ENCODE measurements at regions of chrX and their contacts with region 1.

Region 1: DNA sequence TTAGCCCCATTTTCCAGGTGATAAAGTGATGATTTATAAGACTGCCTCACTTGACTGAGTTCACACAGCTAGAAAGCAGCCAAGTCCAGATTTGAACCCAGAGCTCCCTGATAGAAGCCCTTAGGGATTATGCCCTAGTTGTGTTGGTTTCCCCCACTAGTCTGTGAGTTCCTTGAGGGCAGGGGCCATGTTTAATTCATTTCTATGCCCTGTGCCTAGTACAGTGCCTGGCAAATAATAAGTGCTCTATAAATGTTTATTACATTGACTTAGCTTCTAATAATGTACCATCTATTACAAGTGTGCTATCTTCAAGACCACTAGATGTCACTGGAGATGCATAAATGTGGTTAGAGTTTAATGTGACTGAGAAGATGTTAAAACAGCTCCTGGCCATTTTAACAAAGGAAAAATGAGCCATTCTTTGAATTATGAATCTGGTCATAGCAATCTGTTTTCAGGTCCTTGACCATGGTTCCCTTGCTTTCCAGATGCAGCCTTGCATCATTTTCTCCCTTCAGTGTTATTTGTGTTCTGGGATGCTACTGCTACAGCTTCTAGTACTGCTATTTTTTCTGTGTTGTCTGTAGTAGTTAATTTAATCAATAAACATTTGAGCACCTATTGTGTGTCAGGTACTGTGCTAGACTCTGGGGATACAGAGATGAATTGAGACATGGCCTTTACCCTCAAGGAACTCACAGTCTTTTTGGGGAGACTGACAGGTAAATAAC is 43.2 kb downstream of the SLC9A6 start:
- DNase-seq: no peak
- H3K4me3 ChIP-seq: no peak overlapping the region
- H3K27ac ChIP-seq: peak overlapping the region in 1 of 2 donors; percentile 86
- H3K4me1 ChIP-seq: peaks cover 2 to 34% of the 10 kb centered on the region in 2 donors
- H3K27me3 ChIP-seq: no peaks in the 10 kb centered on the region
- CTCF ChIP-seq: peak; percentile 58 to 77 (median 63)

Region 2: GRCh38 chrX:135081693-135082404 is 946.6 kb before region 1 on chrX:
- intact Hi-C with region 1: no loop called
- DNase-seq: no peak
- H3K4me3 ChIP-seq: no peak overlapping the region
- H3K27ac ChIP-seq: no peak overlapping the region
- H3K4me1 ChIP-seq: no peaks in the 10 kb centered on the region
- H3K27me3 ChIP-seq: no peaks in the 10 kb centered on the region
- CTCF ChIP-seq: no peak

Region 3: GRCh38 chrX:136065044-136065671 is 36.7 kb after region 1 on chrX:
- intact Hi-C with region 1: no loop called
- DNase-seq: no peak
- H3K4me3 ChIP-seq: no peak overlapping the region
- H3K27ac ChIP-seq: peak overlapping the region; percentile 82 to 88
- H3K4me1 ChIP-seq: peaks cover 2 to 16% of the 10 kb centered on the region in 2 donors
- H3K27me3 ChIP-seq: no peaks in the 10 kb centered on the region
- CTCF ChIP-seq: no peak

Region 4: GRCh38 chrX:136121788-136122187 is 93.4 kb after region 1 on chrX:
- intact Hi-C with region 1: loop called (anchors 5 kb)
- DNase-seq: peak in 1 of 2 donors; percentile 68
- H3K4me3 ChIP-seq: no peak overlapping the region
- H3K27ac ChIP-seq: peak overlapping the region in 1 of 2 donors; percentile 45
- H3K4me1 ChIP-seq: peaks cover 0 to 6% of the 10 kb centered on the region in 2 donors
- H3K27me3 ChIP-seq: no peaks in the 10 kb centered on the region
- CTCF ChIP-seq: no peak

Region 5: DNA sequence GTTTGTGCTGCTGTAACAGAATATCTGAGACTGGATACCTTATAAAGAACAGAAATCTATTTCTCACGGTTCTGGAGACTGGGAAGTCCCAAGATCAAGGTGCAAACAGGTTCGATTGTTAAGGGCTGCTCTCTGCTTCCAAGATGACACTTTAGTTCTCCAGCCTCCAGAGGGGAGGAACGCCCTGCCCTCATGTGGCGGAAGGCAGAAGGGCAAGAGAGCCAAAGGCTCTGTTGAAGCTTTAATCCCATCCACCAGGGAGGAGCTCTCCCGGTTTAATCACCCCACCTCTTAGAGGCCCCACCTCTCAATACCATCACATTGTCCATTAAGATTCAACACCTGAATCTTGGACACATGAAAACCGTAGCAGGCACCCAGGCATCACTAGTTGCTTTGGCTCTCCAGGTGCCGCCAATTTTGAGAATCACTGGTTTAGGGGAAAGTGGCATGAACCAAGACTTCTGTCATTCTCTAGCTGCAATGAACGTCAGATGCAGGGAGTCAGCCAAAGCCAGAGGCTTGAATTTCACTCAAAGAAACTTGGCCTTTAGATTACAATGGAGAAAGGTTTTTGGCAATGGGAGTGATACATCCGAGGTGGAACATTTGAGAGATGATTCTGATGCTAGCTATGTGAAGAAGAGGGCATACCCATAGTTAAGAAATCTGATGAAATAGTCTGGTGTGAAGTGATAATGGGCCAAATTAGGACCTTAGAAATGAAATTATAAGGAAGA is 134.6 kb after region 1 on chrX:
- intact Hi-C with region 1: loop called (anchors 1 kb)
- DNase-seq: peak in 1 of 2 donors; percentile 78
- H3K4me3 ChIP-seq: peak overlapping the region in 1 of 2 donors; percentile 30
- H3K27ac ChIP-seq: peak overlapping the region; percentile 61 to 80
- H3K4me1 ChIP-seq: peaks cover 3 to 13% of the 10 kb centered on the region in 2 donors
- H3K27me3 ChIP-seq: no peaks in the 10 kb centered on the region
- CTCF ChIP-seq: peak; percentile 65 to 72 (median 68)

Region 6: DNA sequence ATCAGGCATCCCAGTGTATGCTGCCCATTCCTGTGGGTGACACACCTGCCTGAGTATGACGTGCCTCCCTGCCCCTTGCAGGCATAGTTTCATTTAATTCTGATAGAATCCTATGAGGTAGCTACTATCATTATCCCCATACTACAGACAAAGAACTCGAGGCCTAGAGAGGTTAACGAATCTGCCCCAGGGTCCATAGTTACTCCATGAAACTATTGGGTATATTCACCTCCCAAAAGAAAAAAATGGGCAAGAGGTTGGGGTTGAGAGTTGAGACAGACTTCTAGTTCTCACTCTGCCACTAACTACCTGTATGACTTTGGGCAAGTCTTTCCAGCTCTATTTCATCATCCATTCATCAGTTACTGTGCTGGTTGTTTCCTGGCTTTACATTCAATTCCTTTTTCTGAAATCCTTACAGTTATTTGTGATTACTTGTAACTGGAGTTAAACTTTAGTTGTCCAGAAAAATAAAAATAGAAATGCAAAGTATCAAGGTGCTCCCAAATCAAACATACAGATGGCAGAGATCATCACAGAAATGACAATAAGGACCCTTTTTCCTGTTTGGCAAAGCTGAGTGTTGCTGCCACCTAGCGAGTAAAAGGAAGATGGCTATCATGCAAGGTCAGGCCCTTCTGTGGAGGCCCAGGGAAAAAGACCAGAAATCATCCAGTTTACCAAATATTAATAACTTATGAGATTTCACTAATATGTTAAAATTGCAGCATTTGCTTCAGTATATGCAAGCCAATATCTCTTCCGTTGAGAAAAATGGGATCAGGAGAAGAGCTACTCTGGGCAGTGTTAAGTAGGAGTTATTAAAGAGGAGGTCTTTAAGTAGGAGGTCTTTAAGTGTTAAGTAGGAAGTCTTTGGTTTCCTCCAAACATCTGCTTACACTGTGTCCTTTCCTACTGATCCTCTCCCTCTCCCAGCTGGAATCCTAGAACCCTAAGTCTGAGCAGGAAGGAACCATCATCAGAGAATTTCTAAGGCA is 239.9 kb after region 1 on chrX:
- intact Hi-C with region 1: loop called (anchors 2 kb)
- DNase-seq: no peak
- H3K4me3 ChIP-seq: no peak overlapping the region
- H3K27ac ChIP-seq: no peak overlapping the region
- H3K4me1 ChIP-seq: no peaks in the 10 kb centered on the region
- H3K27me3 ChIP-seq: no peaks in the 10 kb centered on the region
- CTCF ChIP-seq: peak; percentile 32 to 80 (median 77)

Region 7: GRCh38 chrX:136577552-136577951 is 549.1 kb after region 1 on chrX:
- intact Hi-C with region 1: loop called (anchors 5 kb)
- DNase-seq: no peak
- H3K4me3 ChIP-seq: no peak overlapping the region
- H3K27ac ChIP-seq: no peak overlapping the region
- H3K4me1 ChIP-seq: no peaks in the 10 kb centered on the region
- H3K27me3 ChIP-seq: no peaks in the 10 kb centered on the region
- CTCF ChIP-seq: peak; percentile 24 to 66 (median 61)

Measured in ascending aorta (tissue), 2 donors.